CD4-positive, alpha-beta memory T cell (primary cell): ENCODE measurements at regions of chr16 and their contacts with region 1.

Region 1: DNA sequence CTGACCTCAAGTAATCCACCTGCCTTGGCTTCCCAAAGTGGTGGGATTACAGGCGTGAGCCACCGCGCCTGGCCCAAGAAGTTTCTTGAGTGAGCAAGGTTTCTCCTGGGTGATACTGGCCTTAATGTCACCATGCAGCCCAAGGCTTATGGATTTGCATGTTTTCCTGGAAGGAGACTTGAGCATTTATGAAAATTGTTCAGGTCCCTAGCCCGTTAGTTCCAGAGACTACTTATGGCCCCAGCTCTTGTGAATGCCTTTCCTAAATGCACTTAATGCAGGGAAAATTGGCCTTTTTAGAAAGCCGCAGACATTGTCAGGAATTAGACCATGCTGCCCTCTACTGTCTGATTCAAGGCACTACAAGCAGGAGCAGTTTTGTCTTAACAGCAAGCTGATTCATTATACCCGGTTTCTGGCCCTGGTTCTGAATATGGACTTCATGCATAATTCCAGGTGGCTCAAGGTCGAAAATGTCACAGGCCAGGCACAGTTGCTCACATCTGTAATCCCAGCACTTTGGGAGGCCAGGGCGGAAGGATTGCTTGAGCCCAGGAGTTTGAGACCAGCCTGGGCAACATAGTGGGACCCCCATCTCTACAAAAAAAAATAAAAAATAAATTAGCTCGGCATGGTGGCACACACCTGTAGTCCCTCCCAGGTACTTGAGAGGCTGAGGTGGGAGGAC is 91.3 kb downstream of the SNX29 start:
- DNase-seq: peak; percentile 62 to 67 (median 66)
- H3K4me3 ChIP-seq: no peak overlapping the region
- H3K4me3 Mint-ChIP-seq: no peak overlapping the region
- H3K27ac ChIP-seq: no peak overlapping the region
- H3K27ac Mint-ChIP-seq: peak overlapping the region in 3 of 7 donors; percentile 14 to 70 (median 29)
- H3K4me1 ChIP-seq: no peaks in the 10 kb centered on the region
- H3K4me1 Mint-ChIP-seq: peaks cover 4 to 6% (median 5%) of the 10 kb centered on the region in 4 donors
- H3K27me3 ChIP-seq: no peaks in the 10 kb centered on the region
- H3K27me3 Mint-ChIP-seq: no peaks in the 10 kb centered on the region

Region 2: DNA sequence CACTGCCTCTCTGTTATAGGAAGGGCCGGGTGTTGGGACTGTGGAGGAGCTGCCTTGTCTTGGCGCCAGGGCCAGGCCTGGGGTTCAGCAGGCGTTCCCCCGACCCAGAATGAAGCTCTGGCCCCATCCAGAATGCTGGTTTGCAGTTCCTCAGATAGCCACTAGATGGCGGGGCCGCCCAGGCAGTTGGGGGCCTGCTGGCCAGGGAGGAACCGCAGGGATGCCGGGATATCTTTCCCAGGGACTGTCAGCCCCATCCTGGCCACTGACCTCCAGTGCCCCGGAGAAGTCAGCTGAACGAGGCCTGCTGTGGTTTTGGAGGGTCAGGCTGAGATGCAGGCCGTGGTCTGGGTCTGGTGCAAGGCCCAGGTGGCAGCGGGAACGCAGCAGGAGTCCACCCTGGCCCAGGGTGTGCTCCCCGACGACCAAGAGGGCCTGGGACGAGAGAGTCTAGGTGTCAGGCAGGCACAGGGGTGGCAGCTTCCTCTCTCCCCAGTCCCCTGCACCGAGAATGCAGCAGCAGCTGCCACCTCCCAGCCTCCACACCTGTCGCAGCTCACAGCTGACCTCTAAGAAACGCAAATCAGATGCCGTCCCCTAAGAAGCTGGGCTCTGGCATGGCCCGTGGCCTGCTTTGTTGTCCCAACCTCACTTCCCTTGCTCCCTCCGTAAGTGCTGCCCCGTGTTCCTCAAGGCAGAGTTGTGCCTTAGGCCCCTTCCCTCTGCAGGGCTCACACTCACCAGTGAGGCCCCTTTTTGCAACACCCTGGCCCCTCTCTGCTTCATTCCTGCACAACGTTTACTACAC is 671.4 kb before region 1 on chr16:
- CTCF ChIA-PET with region 1: interaction called, 17 read pairs
- POLR2A ChIA-PET with region 1: no interaction called
- intact Hi-C with region 1: no loop called
- DNase-seq: peak; percentile 51 to 65 (median 54)
- H3K4me3 ChIP-seq: no peak overlapping the region
- H3K4me3 Mint-ChIP-seq: no peak overlapping the region
- H3K27ac ChIP-seq: no peak overlapping the region
- H3K27ac Mint-ChIP-seq: peak overlapping the region in 1 of 7 donors; percentile 24
- H3K4me1 ChIP-seq: peaks cover 5% of the 10 kb centered on the region
- H3K4me1 Mint-ChIP-seq: peaks cover 0 to 5% (median 1%) of the 10 kb centered on the region in 4 donors
- H3K27me3 ChIP-seq: no peaks in the 10 kb centered on the region
- H3K27me3 Mint-ChIP-seq: no peaks in the 10 kb centered on the region

Region 3: DNA sequence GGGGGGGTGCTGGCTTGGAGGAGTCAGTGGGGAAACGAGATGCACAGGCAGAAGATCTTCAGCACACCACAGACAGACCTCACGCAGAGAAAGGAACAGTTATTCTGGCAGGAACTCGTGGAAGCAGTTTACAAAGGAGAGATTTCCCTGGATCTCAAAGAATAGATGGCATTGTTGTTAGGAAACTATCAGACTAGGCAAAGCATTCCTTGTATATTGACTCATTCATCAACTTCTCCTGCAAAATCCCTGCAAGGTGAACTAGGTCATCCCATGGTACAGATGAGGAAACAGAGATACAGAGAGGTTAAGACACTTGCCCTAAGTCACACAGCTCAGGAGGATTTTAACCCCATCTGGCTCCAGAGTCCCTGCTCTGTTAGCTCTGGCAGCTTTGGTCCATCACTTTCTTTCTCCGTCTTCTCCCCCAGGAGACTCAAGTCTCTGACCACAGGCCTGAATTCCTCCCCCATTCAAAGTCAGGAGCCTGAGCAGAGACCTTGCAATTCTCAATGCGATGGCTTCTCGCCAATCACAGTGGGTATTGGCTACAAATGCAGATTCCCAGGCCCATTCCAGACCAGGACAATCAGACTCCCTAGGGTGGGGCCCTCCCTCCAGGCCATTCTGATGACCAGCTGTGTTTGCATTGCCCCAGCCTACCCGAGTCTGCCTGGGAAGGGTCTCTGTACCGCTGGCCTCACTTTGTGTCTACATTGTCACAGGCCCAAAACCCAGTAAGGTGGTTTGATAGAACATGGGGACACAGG is 537.5 kb before region 1 on chr16:
- CTCF ChIA-PET with region 1: interaction called, 12 read pairs
- POLR2A ChIA-PET with region 1: no interaction called
- intact Hi-C with region 1: loop called (anchors 10 kb)
- DNase-seq: no peak
- H3K4me3 ChIP-seq: no peak overlapping the region
- H3K4me3 Mint-ChIP-seq: no peak overlapping the region
- H3K27ac ChIP-seq: no peak overlapping the region
- H3K27ac Mint-ChIP-seq: peak overlapping the region in 3 of 7 donors; percentile 10 to 40 (median 18)
- H3K4me1 ChIP-seq: no peaks in the 10 kb centered on the region
- H3K4me1 Mint-ChIP-seq: peaks cover 3 to 11% (median 5%) of the 10 kb centered on the region in 4 donors
- H3K27me3 ChIP-seq: no peaks in the 10 kb centered on the region
- H3K27me3 Mint-ChIP-seq: no peaks in the 10 kb centered on the region

Region 4: DNA sequence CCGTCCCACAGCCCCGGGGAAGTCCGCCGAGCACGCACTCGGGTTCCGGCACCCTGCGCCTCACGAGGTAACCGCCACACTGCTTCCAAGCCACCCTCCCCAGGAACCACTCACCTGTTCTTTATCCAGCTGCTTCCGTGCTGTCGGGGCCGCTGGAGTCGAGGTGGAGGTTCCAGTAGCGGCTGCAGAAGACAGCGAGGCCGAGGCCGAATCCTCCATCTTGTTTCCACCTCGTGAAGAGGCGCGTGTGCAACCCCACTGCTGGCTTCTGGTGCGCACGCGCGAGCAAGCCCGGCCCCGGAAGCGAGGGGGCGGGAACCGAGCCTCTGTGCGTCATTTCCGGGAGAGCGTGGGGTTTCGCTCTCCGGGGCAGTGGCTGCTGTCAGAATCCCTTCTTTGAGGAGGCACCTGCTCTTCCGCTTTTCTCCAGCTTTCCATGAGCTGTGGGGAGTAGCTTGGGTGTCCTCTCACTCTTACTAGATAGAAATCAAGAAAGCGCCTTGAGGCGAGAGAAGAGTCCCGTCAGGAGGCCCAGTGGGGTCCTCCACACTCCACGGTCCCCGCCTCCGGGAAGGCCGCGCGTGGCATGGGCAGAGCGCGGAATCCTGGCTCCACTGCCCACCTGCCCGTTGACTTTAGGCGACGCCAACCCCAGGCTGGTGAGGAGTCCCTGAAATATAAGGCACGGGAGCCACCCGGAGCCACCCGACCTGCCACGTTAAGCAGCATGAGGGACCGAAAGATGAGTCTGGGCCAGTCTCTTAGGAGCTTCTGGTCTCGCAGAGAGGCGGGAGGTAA is 216.4 kb before region 1 on chr16 and contains the start of gene RSL1D1:
- CTCF ChIA-PET with region 1: interaction called, 4 read pairs
- POLR2A ChIA-PET with region 1: interaction called, 5 read pairs
- intact Hi-C with region 1: loop called (anchors 1 kb)
- DNase-seq: peak; percentile 92 to 97 (median 95)
- H3K4me3 ChIP-seq: peak within 1 kb of the TSS; percentile 76 to 96
- H3K4me3 Mint-ChIP-seq: peak within 1 kb of the TSS; percentile 98 to 99 (median 99)
- H3K27ac ChIP-seq: peak within 1 kb of the TSS; percentile 94
- H3K27ac Mint-ChIP-seq: peak within 1 kb of the TSS; percentile 97 to 99 (median 98)
- H3K4me1 ChIP-seq: peaks cover 54% of the 10 kb centered on the region
- H3K4me1 Mint-ChIP-seq: peaks cover 27 to 77% (median 47%) of the 10 kb centered on the region in 4 donors
- H3K27me3 ChIP-seq: no peaks in the 10 kb centered on the region
- H3K27me3 Mint-ChIP-seq: no peaks in the 10 kb centered on the region
- total RNA-seq, gene RSL1D1: 180 to 206 TPM

Region 5: DNA sequence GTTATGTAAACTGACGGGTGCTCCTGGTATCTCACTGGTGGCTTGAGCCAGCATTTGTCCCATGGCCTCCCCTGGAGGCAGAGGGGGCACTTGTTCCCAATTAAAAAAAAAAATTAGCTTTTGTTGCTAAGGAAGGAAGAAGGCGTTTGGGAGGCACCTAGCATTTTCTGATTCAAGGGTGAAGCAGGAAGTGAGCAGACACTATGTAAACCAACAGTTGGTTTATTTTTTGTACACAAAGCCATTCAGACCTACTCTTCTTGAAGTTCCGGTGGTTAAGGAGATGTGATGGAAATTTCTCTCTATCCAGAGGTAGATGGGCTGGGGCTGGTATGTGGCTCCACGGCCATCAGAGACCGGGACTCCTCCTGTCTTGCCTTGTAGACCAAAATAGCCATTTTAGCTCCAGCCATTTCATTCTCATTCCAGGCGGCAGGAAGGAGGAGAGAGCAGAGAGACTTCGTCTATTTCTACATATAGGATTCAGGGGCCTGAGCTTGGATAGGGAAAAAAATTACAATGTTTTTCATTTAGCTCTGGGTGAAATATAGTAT is 11.6 kb after region 1 on chr16:
- CTCF ChIA-PET with region 1: interaction called, 41 read pairs
- POLR2A ChIA-PET with region 1: interaction called, 8 read pairs
- intact Hi-C with region 1: no loop called
- DNase-seq: peak in 4 of 5 donors; percentile 17 to 49 (median 43)
- H3K4me3 ChIP-seq: peak overlapping the region; percentile 2 to 6
- H3K4me3 Mint-ChIP-seq: peak overlapping the region; percentile 71 to 91 (median 84)
- H3K27ac ChIP-seq: peak overlapping the region; percentile 58
- H3K27ac Mint-ChIP-seq: peak overlapping the region; percentile 91 to 99 (median 97)
- H3K4me1 ChIP-seq: peaks cover 71% of the 10 kb centered on the region
- H3K4me1 Mint-ChIP-seq: peaks cover 51 to 89% (median 67%) of the 10 kb centered on the region in 4 donors
- H3K27me3 ChIP-seq: no peaks in the 10 kb centered on the region
- H3K27me3 Mint-ChIP-seq: no peaks in the 10 kb centered on the region

Region 6: DNA sequence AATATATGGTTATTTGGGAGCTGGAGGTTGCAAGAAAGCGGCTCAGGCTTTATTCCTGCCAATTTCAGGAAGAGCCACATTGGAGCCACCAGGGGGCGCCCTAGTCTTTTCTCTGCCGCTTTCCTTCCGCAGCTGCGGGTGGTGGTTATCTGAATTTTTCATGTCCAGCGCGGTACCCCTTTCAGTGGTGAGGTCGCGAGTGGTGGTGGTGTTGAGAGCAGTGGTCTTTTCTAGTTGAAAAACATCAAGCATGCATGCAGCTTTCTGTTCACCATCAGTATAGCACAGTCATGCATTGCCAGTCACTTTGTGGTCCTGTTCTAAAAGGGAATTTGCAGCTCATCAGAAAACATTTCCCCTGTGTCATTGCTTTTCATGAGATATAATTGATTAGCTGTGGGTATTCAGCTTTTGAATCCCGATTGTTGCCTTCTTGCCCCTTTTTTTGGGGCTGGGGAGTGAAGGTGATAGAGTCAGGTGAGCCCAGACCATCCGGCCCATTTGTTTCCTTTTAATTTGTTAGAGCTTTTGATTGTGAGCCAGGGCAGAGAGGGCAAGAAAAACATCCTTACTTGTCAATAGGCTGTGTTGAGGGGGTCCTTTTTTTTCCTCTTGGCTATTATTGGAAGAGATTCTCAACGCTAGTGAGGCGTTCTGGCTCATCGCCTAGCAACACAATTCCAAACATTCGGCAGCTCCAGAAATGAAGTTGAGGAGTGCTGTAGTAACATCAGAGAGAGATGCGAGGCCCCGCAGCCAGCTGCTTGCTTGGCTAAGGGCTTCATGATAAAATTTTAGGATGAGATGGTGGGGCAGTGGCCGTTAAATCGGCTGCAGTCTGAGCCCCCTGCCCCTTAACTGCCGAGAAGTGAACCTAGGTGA is 27.7 kb after region 1 on chr16:
- CTCF ChIA-PET with region 1: interaction called, 54 read pairs
- POLR2A ChIA-PET with region 1: interaction called, 8 read pairs
- intact Hi-C with region 1: no loop called
- DNase-seq: peak in 4 of 5 donors; percentile 50 to 55 (median 52)
- H3K4me3 ChIP-seq: no peak overlapping the region
- H3K4me3 Mint-ChIP-seq: peak overlapping the region in 7 of 8 donors; percentile 61 to 88 (median 70)
- H3K27ac ChIP-seq: no peak overlapping the region
- H3K27ac Mint-ChIP-seq: peak overlapping the region in 5 of 7 donors; percentile 7 to 73 (median 26)
- H3K4me1 ChIP-seq: peaks cover 10% of the 10 kb centered on the region
- H3K4me1 Mint-ChIP-seq: peaks cover 7 to 29% (median 11%) of the 10 kb centered on the region in 4 donors
- H3K27me3 ChIP-seq: no peaks in the 10 kb centered on the region
- H3K27me3 Mint-ChIP-seq: no peaks in the 10 kb centered on the region

Region 7: GRCh38 chr16:12110361-12111107 is 42.7 kb after region 1 on chr16:
- CTCF ChIA-PET with region 1: no interaction called
- POLR2A ChIA-PET with region 1: no interaction called
- intact Hi-C with region 1: no loop called
- DNase-seq: no peak
- H3K4me3 ChIP-seq: no peak overlapping the region
- H3K4me3 Mint-ChIP-seq: no peak overlapping the region
- H3K27ac ChIP-seq: no peak overlapping the region
- H3K27ac Mint-ChIP-seq: no peak overlapping the region
- H3K4me1 ChIP-seq: no peaks in the 10 kb centered on the region
- H3K4me1 Mint-ChIP-seq: peaks cover 0 to 4% (median 3%) of the 10 kb centered on the region in 4 donors
- H3K27me3 ChIP-seq: no peaks in the 10 kb centered on the region
- H3K27me3 Mint-ChIP-seq: no peaks in the 10 kb centered on the region